ENCODE measurements at regions of chr19 and their contacts with region 1.

Region 1: GRCh38 chr19:58182989-58183816 is at the start of gene ZNF274:
- DNase-seq: peak; percentile 95 to 98 (median 98)
- ATAC-seq: peak; percentile 97
- H3K4me3 ChIP-seq: peak within 1 kb of the TSS; percentile 79
- H3K27ac ChIP-seq: peak within 1 kb of the TSS; percentile 100
- H3K4me1 ChIP-seq: no peaks in the 10 kb centered on the region
- H3K27me3 ChIP-seq: no peaks in the 10 kb centered on the region
- total RNA-seq, gene ZNF274: 19.1 to 24.8 (median 22.4) TPM

Region 2: GRCh38 chr19:57786291-57786690 is 396.9 kb before region 1 on chr19:
- intact Hi-C with region 1: loop called in 1 of 4 experiments (anchors 5 kb)
- DNase-seq: peak in 2 of 3 donors; percentile 53 to 58
- ATAC-seq: peak; percentile 34 to 41
- H3K4me3 ChIP-seq: no peak overlapping the region
- H3K27ac ChIP-seq: no peak overlapping the region
- H3K4me1 ChIP-seq: no peaks in the 10 kb centered on the region
- H3K27me3 ChIP-seq: no peaks in the 10 kb centered on the region